WTC11 (cell line): ENCODE measurements at regions of chr16 and their contacts with region 1.

Region 1: DNA sequence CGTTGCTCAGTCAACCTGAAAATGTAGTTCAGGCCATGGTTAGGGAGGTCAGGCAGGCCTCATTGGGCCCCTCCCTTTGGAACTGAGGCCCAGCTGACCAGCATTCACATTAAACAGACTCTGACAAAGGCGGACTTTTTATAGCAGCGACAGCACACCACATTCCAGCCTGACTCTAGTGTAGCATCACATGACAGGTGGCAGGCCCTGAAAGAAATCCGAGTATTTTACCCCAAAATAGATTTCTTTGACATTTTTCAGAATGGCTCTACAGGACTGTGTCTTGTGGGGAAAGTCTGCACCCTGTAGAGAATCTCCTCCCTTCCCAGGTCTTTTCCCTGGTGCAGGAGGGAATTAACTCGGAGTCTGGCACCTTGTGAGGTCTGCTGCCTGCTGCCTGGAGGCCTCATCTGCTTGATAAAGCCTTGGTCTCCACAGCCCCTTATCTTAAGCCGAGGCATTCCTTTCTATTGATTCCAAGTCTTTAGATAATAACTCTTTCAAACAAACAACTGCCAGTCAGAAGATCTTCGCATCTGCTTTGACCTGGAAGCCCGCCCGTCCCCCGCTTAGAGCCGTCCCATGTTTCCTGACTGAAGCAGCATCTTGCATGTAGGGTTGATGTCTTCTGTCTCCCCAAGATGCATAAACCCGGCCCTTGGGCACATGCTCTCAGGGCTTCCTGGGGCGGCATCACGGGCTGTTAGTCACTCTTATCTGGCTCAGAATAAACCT is 44.0 kb upstream of the CAPN15 start:
- DNase-seq: no peak
- ATAC-seq: peak; percentile 74
- H3K4me3 Mint-ChIP-seq: no peak overlapping the region
- H3K27ac Mint-ChIP-seq: peak overlapping the region; percentile 92
- H3K4me1 Mint-ChIP-seq: peaks cover 14% of the 10 kb centered on the region
- H3K27me3 Mint-ChIP-seq: no peaks in the 10 kb centered on the region
- CTCF ChIP-seq: no peak

Region 2: DNA sequence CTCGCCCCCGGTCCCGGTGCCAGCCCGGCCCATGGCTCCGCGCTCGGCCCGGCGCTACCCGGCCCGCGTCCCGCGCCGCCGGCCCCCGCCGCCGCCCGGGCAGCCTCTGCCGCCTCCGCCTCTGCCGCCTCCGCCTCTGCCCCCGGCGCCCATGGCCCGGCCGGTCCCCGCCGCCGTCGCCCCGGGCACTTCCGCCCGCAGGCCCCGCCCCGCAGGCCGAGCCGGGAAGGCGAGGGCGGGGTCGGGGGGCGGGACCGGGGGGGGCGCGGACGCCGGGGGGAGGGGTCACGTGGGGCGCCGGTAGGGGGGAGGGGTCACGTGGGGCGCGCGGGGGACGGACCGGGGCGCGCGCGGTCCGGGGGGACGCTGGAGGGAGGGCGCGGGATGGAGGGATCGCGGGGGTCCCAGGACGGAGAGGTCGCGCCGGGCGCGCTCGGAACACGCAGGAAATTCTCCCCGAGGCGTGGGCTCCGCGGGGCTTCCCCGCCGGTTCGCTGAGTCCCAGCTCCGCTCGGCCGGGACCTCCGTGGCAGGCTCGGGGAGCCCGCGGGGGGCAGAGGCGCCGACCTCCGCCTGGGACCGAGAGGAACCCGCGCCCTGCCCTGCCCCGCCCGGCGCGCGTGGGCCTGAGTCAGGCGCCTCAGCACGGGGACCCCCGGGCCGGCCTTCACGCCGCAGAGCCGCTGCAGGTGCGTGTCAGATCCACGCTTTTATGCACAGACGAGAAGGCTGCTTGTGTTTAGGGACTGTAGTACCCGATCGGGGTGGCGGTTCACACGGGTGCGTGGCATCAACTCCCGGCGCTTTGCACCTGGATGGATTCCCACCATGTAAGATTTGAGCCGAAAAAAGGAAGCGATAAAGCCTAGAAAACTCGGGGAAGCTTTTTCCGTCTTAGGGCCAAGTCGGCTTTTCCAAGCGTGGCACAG is 101.5 kb before region 1 on chr16 and contains the start of gene PGAP6:
- CTCF ChIA-PET with region 1: interaction called, 12 read pairs
- POLR2A ChIA-PET with region 1: no interaction called
- DNase-seq: peak; percentile 57
- ATAC-seq: no peak
- H3K4me3 Mint-ChIP-seq: peak within 1 kb of the TSS; percentile 79
- H3K27ac Mint-ChIP-seq: peak within 1 kb of the TSS; percentile 98
- H3K4me1 Mint-ChIP-seq: peaks cover 40% of the 10 kb centered on the region
- H3K27me3 Mint-ChIP-seq: no peaks in the 10 kb centered on the region
- CTCF ChIP-seq: no peak
- total RNA-seq, gene PGAP6: 104 to 108 TPM (median 107 TPM) in 3 replicates

Region 3: GRCh38 chr16:391885-392335 is 91.6 kb before region 1 on chr16:
- CTCF ChIA-PET with region 1: interaction called, 27 read pairs
- POLR2A ChIA-PET with region 1: no interaction called
- DNase-seq: peak; percentile 88
- ATAC-seq: peak; percentile 85
- H3K4me3 Mint-ChIP-seq: no peak overlapping the region
- H3K27ac Mint-ChIP-seq: no peak overlapping the region
- H3K4me1 Mint-ChIP-seq: peaks cover 27% of the 10 kb centered on the region
- H3K27me3 Mint-ChIP-seq: peaks cover 3% of the 10 kb centered on the region; the same call in 1 of the 2 replicates
- CTCF ChIP-seq: peak; percentile 97

Region 4: GRCh38 chr16:425082-425718 is 58.3 kb before region 1 on chr16 and contains the start of gene RAB11FIP3:
- CTCF ChIA-PET with region 1: interaction called, 25 read pairs
- POLR2A ChIA-PET with region 1: no interaction called
- DNase-seq: peak; percentile 80
- ATAC-seq: peak; percentile 82
- H3K4me3 Mint-ChIP-seq: peak within 1 kb of the TSS; percentile 67
- H3K27ac Mint-ChIP-seq: no peak within 1 kb of the TSS
- H3K4me1 Mint-ChIP-seq: peaks cover 14% of the 10 kb centered on the region
- H3K27me3 Mint-ChIP-seq: peaks cover 54% of the 10 kb centered on the region
- CTCF ChIP-seq: no peak
- total RNA-seq, gene RAB11FIP3: 37.1 to 38.6 TPM (median 37.9 TPM) in 3 replicates

Region 5: DNA sequence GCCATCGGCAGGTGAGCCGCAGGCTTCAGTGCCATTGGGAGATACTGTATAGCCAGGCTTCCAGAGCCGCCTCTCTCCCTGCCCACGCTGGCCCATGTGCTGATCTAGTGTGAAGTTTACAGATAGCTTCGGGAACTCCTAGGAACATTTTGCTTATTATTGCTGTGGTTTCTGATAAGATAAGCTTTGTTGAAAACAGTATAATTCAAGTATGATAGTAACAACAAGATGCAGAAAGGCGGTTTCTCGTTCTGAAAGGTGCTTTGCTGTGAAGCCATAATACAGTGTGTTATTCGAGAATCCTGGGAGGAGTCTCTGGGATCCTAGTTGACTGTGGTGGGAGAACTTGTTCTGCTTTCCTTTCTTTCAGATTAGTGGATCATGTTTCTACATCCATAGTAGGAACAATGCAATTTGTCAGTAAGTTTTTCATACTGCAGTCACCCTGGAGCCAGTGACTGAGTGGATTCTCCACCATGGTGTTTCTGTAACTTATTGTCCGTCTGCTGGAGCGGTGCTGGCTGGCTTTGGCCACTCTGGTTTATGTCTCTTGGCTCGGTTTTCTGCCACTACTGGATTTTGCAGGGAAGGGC is 26.5 kb before region 1 on chr16:
- CTCF ChIA-PET with region 1: interaction called, 10 read pairs
- POLR2A ChIA-PET with region 1: no interaction called
- DNase-seq: no peak
- ATAC-seq: peak; percentile 45; the same call in 1 of the 2 replicates
- H3K4me3 Mint-ChIP-seq: no peak overlapping the region
- H3K27ac Mint-ChIP-seq: peak overlapping the region; percentile 69; the same call in 1 of the 2 replicates
- H3K4me1 Mint-ChIP-seq: peaks cover 14% of the 10 kb centered on the region
- H3K27me3 Mint-ChIP-seq: no peaks in the 10 kb centered on the region
- CTCF ChIP-seq: no peak

Region 6: DNA sequence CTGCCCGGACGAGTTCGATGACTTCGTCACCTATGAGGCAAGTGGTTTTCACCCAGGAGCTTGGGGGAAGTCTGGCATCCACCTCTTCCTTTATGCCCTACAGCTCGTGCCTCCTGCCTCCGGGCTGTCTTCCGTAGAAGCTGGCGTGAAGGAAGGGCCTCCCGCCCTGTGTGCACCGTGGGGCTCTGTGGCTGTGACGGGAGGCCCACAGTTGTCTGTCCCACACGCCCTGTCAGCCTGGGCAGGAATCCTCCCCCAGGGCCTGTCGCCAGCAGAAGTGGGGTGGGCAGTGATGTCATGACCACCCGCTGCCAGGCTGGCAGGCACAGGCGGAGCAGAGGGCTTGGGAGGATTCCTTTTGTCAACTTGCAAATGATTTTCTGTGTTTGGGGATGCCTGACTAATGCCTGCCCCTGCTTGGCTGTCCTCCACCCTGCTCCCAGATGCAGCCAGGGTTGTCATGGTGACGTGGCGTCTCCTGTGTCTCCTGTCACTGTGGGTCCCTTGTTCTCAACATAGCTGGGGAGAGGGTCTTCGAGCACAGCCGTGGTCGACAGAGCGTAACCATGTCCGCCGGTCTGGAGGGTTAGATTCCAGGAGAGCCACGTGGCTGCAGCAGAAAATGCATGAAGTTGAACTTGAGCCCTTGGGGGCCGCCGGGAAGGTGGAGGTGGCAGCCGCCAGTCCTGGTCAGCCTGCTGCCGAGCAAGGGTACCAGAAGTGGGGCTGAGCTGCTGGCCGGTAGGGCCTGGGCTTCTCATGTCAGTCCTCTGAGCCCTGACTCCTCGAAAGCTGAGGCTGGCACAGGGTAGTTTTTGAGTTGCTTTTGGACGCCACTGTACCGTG is 11.9 kb before region 1 on chr16:
- CTCF ChIA-PET with region 1: interaction called, 40 read pairs
- POLR2A ChIA-PET with region 1: no interaction called
- DNase-seq: peak; percentile 68
- ATAC-seq: peak; percentile 87
- H3K4me3 Mint-ChIP-seq: peak overlapping the region; percentile 16; the same call in 1 of the 2 replicates
- H3K27ac Mint-ChIP-seq: peak overlapping the region; percentile 94
- H3K4me1 Mint-ChIP-seq: peaks cover 45% of the 10 kb centered on the region
- H3K27me3 Mint-ChIP-seq: no peaks in the 10 kb centered on the region
- CTCF ChIP-seq: no peak

Region 7: GRCh38 chr16:495127-495748 is 11.7 kb after region 1 on chr16:
- CTCF ChIA-PET with region 1: interaction called, 49 read pairs
- POLR2A ChIA-PET with region 1: no interaction called
- DNase-seq: peak; percentile 73
- ATAC-seq: peak; percentile 93
- H3K4me3 Mint-ChIP-seq: no peak overlapping the region
- H3K27ac Mint-ChIP-seq: no peak overlapping the region
- H3K4me1 Mint-ChIP-seq: peaks cover 15% of the 10 kb centered on the region
- H3K27me3 Mint-ChIP-seq: no peaks in the 10 kb centered on the region
- CTCF ChIP-seq: no peak

Region 8: GRCh38 chr16:549544-550263 is 66.2 kb after region 1 on chr16:
- CTCF ChIA-PET with region 1: no interaction called
- POLR2A ChIA-PET with region 1: no interaction called
- DNase-seq: peak; percentile 70
- ATAC-seq: peak; percentile 56
- H3K4me3 Mint-ChIP-seq: no peak overlapping the region
- H3K27ac Mint-ChIP-seq: no peak overlapping the region
- H3K4me1 Mint-ChIP-seq: no peaks in the 10 kb centered on the region
- H3K27me3 Mint-ChIP-seq: no peaks in the 10 kb centered on the region
- CTCF ChIP-seq: peak; percentile 46